ENCODE measurements at regions of chr12 and their contacts with region 1.

Region 1: DNA sequence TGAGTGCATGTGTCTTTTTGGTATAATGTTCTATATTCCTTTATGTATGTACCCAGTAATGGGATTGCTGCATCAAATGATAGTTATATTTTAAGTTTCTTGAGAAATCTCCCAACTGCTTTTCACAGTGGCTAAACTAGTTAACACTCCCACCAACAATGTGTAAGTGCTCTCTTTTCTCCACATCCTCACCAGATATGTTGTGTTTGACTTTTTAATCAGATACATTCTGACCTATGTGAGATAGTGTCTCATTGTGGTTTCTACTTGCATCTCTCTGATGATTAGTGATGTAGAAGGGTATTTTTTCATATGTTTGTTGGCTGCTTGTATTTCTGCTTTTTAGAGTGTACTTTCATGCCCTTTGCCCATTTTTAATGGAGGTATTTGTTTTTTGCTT is 62.8 kb upstream of the ALG10B start:
- DNase-seq: no peak
- ATAC-seq: no peak
- H3K4me3 ChIP-seq: no peak overlapping the region
- H3K27ac ChIP-seq: no peak overlapping the region
- H3K4me1 ChIP-seq: no peaks in the 10 kb centered on the region
- H3K27me3 ChIP-seq: no peaks in the 10 kb centered on the region
- CTCF ChIP-seq: no peak

Region 2: GRCh38 chr12:38175538-38175937 is 78.2 kb before region 1 on chr12:
- CTCF ChIA-PET with region 1: no interaction called
- POLR2A ChIA-PET with region 1: no interaction called
- in situ Hi-C with region 1: no loop called
- intact Hi-C with region 1: loop called (anchors 10 kb)
- DNase-seq: no peak
- ATAC-seq: no peak
- H3K4me3 ChIP-seq: no peak overlapping the region
- H3K27ac ChIP-seq: no peak overlapping the region
- H3K4me1 ChIP-seq: no peaks in the 10 kb centered on the region
- H3K27me3 ChIP-seq: no peaks in the 10 kb centered on the region
- CTCF ChIP-seq: no peak